HEK293T (cell line): ENCODE measurements at regions of chr4 and their contacts with region 1.

Region 1: DNA sequence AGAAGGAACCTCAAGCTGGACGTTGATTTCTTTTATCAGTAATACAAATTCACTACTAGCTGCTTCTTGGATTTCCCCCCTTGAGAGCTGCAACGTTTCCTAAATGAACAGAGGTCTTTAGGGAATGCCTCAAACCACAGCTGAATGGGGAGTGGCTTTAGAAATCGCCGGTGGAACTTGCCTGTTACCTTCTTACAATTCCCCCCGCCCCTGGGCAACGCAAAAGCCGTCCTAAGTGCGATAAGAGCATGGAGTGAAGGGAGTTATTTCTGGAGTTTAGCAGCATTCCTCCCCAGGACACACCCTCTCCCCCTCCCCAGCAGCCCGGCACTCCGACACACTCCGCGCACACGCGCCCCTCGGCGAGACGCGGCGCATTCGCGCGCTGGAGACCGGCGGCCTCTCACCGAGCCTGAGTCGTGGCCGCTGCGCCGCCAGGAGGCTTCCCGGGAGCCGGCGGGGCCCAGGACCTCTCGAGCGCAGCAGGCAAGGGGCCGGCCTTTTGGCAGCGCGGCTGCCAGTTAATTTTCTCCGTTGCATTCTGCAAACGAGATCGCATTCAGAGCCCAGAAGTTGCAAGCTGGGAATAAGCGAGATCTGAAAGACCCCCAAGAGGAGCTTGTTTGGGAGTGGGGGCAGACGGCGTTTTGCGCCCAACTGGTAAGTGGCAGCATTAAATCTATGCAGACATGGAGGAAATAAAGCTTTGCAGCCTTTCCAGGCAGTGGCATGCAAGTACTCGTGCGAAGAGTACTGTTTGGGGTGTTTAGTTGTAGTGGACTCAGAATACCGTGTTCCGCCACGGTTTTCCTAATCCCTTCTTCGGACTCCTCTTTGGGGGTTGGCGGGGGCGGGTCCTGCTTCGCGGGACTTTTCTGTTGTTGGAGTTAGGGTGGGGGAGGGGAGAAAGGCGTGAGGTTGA is 134.7 kb downstream of the PALLD start:
- DNase-seq: peak; percentile 71

Region 2: GRCh38 chr4:168585168-168586091 is 46.1 kb before region 1 on chr4:
- CTCF ChIA-PET with region 1: interaction called, 12 read pairs
- POLR2A ChIA-PET with region 1: interaction called, 21 read pairs
- DNase-seq: peak; percentile 78

Region 3: GRCh38 chr4:168604496-168605373 is 26.8 kb before region 1 on chr4:
- CTCF ChIA-PET with region 1: interaction called, 7 read pairs
- POLR2A ChIA-PET with region 1: interaction called, 17 read pairs
- DNase-seq: peak; percentile 32

Region 4: GRCh38 chr4:168699224-168699878 is 67.8 kb after region 1 on chr4:
- CTCF ChIA-PET with region 1: no interaction called
- POLR2A ChIA-PET with region 1: no interaction called
- DNase-seq: no peak

Region 5: GRCh38 chr4:168831919-168832762 is 200.6 kb after region 1 on chr4:
- CTCF ChIA-PET with region 1: no interaction called
- POLR2A ChIA-PET with region 1: interaction called, 13 read pairs
- DNase-seq: peak; percentile 80